Motor neuron (in vitro differentiated cells): ENCODE measurements at regions of chr4 and their contacts with region 1.

Region 1: DNA sequence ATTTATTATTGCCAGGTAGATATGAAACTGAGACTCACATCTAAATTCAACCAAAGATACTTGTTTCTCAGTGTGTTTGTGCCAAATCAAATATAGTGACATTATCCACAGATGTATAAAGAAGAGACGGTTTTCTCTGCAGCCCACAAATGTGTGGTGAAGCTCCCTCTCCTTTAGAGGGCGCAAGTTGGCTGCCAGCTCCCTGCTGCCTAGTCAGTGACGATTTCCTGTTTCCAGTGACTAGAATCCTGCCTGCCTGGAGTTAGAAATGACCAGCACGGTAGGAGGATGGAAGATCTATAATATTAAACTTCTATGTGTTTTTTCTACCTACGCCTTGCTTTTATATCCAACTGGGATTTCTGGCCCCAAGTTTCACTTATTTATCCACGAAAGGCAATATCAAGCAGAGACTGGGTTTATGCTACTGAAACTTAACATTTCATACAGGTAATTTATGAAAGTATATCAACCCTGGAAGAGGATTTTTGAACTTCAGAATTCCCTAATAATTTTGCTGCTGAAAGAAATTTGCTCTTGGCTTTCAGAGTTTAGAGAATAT is 1793.7 kb upstream of the TENM3 start:
- ATAC-seq: peak in 7 of 8 experiments; percentile 30 to 85 (median 67)
- H3K4me3 ChIP-seq: no peak overlapping the region
- H3K27ac ChIP-seq: no peak overlapping the region
- H3K4me1 ChIP-seq: no peaks in the 10 kb centered on the region

Region 2: GRCh38 chr4:180617196-180617595 is 167.7 kb after region 1 on chr4:
- in situ Hi-C with region 1: loop called in 1 of 9 experiments (anchors 25 kb)
- ATAC-seq: peak in 7 of 8 experiments; percentile 31 to 99 (median 97)
- H3K4me3 ChIP-seq: no peak overlapping the region
- H3K27ac ChIP-seq: no peak overlapping the region
- H3K4me1 ChIP-seq: peaks cover 4 to 18% of the 10 kb centered on the region in 2 donors